Activated naive CD4-positive, alpha-beta T cell treated with anti-CD3 and anti-CD28 coated beads for 36 hours (primary cell): ENCODE measurements at regions of chr10 and their contacts with region 1.

Region 1: DNA sequence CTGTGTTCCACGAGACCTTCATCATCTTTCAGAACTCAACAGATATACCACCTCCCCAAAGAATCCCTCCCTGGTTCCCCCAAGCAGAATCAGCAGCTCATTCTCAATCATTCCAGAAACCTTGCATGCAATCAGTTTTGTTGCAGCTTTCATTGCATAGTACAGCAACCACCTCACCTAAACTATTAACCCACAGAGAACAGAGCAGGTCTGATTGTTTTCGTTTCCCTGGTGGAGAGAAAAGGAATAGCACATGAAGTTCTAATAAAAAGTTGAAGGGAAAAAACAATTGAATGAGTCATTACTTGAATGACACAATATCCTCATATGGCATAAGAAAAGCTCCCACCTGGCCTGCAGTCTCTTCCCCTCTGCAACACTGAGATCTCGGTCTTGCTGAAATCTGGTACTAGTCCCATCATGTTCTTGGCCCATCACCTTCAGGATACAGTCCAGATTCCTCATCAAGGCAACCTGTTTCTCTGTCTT is 147.1 kb upstream of the GDF10 start:
- DNase-seq: peak; percentile 14
- H3K4me3 Mint-ChIP-seq: no peak overlapping the region
- H3K27ac Mint-ChIP-seq: no peak overlapping the region
- H3K4me1 Mint-ChIP-seq: peaks cover 10% of the 10 kb centered on the region
- H3K27me3 Mint-ChIP-seq: no peaks in the 10 kb centered on the region

Region 2: DNA sequence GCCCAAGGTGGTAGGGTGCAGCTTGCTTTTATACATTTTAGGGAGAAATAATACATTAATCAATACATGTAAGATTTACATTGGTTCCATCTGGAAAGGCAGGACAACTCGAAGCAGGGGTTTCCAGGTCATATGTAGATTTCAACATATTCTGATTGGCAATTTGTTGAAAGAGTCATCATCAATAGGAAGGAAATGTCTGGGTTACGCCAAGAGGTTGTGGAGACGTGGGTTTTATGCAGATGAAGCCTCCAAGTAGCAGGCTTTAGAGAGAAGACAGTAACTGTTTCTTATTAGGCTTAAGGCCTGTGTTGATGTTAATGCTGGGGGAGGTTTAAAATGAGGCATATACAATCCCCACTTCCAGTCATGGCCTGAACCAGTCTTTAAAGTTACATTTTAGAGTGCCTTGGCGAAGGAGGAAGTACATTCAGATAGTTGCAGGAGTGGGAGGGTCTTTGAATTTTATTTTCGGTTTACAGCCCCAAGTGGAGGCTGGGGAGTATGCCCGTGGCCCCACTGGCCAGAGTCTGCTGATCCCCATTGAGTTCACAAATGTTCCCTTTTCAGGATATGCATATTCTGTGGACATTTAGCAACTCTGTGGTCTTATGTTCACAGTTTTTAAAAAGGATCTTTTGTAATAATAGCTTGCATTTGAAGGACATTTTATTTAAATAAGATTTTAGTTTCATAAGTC is 18.9 kb before region 1 on chr10:
- CTCF ChIA-PET with region 1: no interaction called
- intact Hi-C with region 1: no loop called
- DNase-seq: no peak
- H3K4me3 Mint-ChIP-seq: no peak overlapping the region
- H3K27ac Mint-ChIP-seq: no peak overlapping the region
- H3K4me1 Mint-ChIP-seq: peaks cover 7% of the 10 kb centered on the region
- H3K27me3 Mint-ChIP-seq: no peaks in the 10 kb centered on the region

Region 3: GRCh38 chr10:47165711-47166524 is 13.0 kb after region 1 on chr10:
- CTCF ChIA-PET with region 1: interaction called, 12 read pairs
- intact Hi-C with region 1: no loop called
- DNase-seq: peak; percentile 62
- H3K4me3 Mint-ChIP-seq: peak overlapping the region; percentile 66
- H3K27ac Mint-ChIP-seq: peak overlapping the region; percentile 87
- H3K4me1 Mint-ChIP-seq: peaks cover 24% of the 10 kb centered on the region
- H3K27me3 Mint-ChIP-seq: no peaks in the 10 kb centered on the region